Activated CD8-positive, alpha-beta T cell treated with anti-CD3 and anti-CD28 coated beads, Interleukin-2, amount 10 ng/mL, durations not matched to agents 7 days and 5 days (primary cell): ENCODE measurements at regions of chr15 and their contacts with region 1.

Region 1: DNA sequence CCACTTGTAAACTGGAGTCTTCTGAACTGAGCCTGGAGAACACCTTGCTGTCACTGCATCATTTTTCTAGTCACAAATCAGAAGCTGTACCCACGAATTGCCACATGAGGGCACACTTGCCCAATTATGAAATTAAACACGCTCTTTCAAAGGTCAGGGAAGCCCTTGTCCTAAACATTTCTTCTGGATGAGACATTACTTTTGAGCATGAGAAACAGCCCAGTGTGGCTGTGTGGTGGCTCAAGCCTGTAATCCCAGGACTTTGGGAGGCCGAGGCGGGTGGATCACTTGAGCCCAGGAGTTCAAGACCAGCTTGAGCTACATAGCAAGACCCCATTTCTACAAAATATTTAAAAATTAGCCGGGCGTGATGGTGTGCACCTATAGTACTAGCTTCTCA is 27.5 kb upstream of the CFAP161 start:
- DNase-seq: peak; percentile 58
- ATAC-seq: no peak
- H3K4me3 Mint-ChIP-seq: no peak overlapping the region
- H3K27ac Mint-ChIP-seq: no peak overlapping the region
- H3K4me1 Mint-ChIP-seq: peaks cover 4% of the 10 kb centered on the region
- H3K27me3 Mint-ChIP-seq: peaks cover 31% of the 10 kb centered on the region

Region 2: DNA sequence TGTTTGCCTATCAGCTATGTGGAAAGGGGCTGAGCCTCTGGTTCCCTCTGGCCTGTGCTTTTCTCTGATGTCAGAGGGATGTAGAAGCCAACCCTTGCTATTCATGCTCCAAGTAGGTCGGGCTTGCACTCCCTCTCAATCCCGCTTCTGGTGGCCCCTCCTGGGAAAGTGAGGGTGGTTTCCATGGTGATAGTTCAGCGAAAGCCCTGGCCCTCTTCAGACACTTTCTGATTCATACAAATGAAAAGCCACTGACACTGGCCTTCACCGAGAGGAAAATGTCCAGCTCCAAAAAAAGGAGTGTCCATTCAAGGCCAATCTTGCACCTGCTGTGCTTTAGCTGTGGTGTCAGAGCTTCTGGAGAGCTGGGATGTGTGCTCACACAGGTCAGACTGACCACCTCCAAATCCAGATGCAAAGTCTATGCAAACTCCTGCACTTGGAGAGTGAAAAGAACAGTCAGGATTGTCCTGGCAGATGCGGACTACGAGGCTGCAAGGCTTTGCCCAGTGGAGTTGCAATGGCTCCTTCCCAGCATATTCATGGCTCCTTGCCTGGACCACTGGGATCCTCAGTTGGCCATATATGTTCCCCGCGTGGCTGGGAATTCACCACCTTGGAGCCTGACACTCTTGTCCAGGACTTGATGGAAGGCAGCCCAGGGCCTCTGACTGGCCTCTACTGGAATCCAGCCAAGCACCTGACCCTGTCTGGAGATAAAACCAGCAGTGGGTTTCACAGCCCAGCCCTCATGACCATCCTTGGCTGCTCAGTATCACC is 230.8 kb before region 1 on chr15:
- CTCF ChIA-PET with region 1: no interaction called
- POLR2A ChIA-PET with region 1: no interaction called
- DNase-seq: no peak
- ATAC-seq: no peak
- H3K4me3 Mint-ChIP-seq: no peak overlapping the region
- H3K27ac Mint-ChIP-seq: no peak overlapping the region
- H3K4me1 Mint-ChIP-seq: no peaks in the 10 kb centered on the region
- H3K27me3 Mint-ChIP-seq: peaks cover 5% of the 10 kb centered on the region

Region 3: DNA sequence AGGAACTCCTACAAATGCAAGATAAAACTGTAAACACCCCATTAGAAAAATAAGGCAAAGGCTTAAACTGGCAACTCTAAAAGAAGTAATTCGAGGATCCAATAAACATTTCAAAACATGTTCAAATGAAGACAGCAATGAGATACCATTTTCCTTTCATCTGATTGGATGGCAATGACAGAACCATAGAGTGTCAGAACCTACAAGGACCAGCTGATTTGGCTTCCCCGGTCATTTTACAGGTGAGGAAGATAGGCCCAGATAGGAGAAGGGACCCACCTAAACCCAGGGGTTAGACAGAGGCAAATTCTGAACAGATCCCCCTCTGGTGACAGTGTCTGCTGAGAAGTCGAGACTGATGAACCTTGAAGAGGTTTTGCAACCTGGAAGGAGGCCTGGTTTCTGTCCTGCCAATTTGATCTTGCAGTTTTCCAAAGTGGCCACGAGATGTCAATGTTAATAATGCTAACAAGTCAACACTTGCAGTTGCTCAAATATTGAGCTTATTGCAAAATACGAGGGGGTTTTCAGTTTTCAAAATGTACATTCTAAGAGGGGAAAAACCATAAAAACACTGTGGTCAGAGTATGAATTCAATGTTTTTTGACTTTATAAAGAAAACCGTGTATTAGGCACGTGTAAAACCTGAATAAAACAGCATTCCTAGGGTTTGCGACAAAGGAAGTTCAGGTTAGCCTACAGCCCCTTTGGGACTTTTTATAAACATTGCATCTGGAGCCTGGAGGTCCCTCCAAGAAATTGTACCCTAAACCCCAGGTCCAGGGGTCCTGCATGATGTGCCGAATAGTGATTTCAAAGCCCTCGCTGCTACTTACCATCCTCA is 49.0 kb after region 1 on chr15:
- CTCF ChIA-PET with region 1: interaction called, 16 read pairs
- POLR2A ChIA-PET with region 1: no interaction called
- DNase-seq: peak; percentile 44
- ATAC-seq: peak; percentile 44
- H3K4me3 Mint-ChIP-seq: no peak overlapping the region
- H3K27ac Mint-ChIP-seq: no peak overlapping the region
- H3K4me1 Mint-ChIP-seq: no peaks in the 10 kb centered on the region
- H3K27me3 Mint-ChIP-seq: peaks cover 5% of the 10 kb centered on the region